Activated T-helper 1 cell treated with anti-CD3 and anti-CD28 coated beads, Interleukin-12 subunit alpha, Interleukin-12 subunit beta, Interleukin-2, Interleukin-4 antibody, amounts not matched to agents 30 ng/mL and 10 ng/mL and 1 ng/mL, durations not matched to agents 14 hours and 24 hours and 36 hours (primary cell): ENCODE measurements at regions of chr6 and their contacts with region 1.

Region 1: DNA sequence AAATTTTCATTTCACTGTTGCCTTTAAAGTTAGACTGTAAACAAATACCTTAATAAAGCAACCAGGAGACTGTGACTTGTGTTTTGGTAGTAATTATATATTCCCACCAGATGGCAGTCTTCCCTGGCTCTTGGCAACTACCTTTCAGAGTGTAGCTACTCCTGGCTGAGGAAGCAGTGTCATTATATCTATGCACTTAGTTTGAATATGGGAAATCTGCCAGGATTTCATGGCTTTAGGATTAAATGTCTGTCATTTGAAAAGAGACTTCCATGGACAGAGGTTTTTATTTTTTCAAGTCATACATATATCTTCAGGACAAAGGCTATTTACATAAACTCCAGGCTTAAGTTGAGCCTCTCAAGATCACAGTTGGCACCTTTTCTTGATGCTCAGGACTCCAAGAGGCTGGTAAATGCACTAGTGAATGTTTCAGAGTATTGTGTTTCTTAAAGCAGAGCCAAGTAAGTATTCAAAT is 160.1 kb downstream of the C6orf58 start:
- DNase-seq: peak; percentile 4
- H3K4me3 Mint-ChIP-seq: no peak overlapping the region
- H3K27ac Mint-ChIP-seq: peak overlapping the region; percentile 29
- H3K4me1 Mint-ChIP-seq: peaks cover 15% of the 10 kb centered on the region
- H3K27me3 Mint-ChIP-seq: no peaks in the 10 kb centered on the region

Region 2: DNA sequence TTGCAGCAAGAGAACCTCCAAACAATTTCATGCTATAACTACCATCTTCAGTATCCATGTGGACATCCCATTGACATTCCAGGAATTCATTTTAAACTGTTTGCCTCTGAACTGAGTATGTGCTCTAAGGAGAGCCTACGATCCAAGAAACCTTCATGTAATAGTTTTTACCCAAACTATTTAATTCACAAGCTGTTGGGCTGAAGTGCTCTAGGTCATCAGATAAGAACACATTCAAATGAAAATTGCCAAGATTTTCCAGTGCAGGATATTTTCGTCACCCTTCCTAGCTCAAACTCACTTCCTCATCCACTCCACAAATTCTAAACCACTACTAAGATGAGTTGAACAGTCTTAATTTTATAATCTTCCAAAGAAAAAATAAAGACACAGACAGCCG is 605.8 kb before region 1 on chr6:
- intact Hi-C with region 1: no loop called
- DNase-seq: no peak
- H3K4me3 Mint-ChIP-seq: no peak overlapping the region
- H3K27ac Mint-ChIP-seq: no peak overlapping the region
- H3K4me1 Mint-ChIP-seq: no peaks in the 10 kb centered on the region
- H3K27me3 Mint-ChIP-seq: peaks cover 17% of the 10 kb centered on the region

Region 3: GRCh38 chr6:128005009-128005408 is 268.0 kb after region 1 on chr6:
- intact Hi-C with region 1: loop called (anchors 10 kb)
- DNase-seq: no peak
- H3K4me3 Mint-ChIP-seq: no peak overlapping the region
- H3K27ac Mint-ChIP-seq: no peak overlapping the region
- H3K4me1 Mint-ChIP-seq: no peaks in the 10 kb centered on the region
- H3K27me3 Mint-ChIP-seq: peaks cover 4% of the 10 kb centered on the region

Region 4: DNA sequence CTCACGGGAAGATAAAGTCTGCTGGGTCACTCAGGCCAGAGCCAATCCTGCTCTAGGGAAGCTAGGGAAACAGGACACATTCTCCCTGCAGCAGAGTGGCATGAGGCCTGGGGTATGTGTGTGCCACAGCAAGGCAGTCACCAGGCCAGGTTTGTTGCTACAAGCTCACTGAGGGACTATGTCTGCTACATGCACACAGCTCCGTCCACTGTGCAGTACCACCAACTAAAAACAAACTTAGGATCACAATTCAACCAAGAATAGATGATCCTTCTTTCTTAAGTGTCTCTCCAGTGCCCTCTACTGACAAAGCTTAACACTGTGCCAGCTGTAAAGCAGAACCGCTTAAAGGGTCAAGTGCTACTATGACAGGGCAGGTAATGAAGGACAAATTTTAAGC is 590.8 kb after region 1 on chr6:
- intact Hi-C with region 1: loop called (anchors 1 kb)
- DNase-seq: peak; percentile 22
- H3K4me3 Mint-ChIP-seq: no peak overlapping the region
- H3K27ac Mint-ChIP-seq: no peak overlapping the region
- H3K4me1 Mint-ChIP-seq: no peaks in the 10 kb centered on the region
- H3K27me3 Mint-ChIP-seq: peaks cover 7% of the 10 kb centered on the region

Region 5: GRCh38 chr6:128731249-128732165 is 994.5 kb after region 1 on chr6:
- intact Hi-C with region 1: loop called (anchors 2 kb)
- DNase-seq: no peak
- H3K4me3 Mint-ChIP-seq: no peak overlapping the region
- H3K27ac Mint-ChIP-seq: no peak overlapping the region
- H3K4me1 Mint-ChIP-seq: no peaks in the 10 kb centered on the region
- H3K27me3 Mint-ChIP-seq: peaks cover 5% of the 10 kb centered on the region